Naive thymus-derived CD4-positive, alpha-beta T cell (primary cell): ENCODE measurements at regions of chr13 and their contacts with region 1.

Region 1: DNA sequence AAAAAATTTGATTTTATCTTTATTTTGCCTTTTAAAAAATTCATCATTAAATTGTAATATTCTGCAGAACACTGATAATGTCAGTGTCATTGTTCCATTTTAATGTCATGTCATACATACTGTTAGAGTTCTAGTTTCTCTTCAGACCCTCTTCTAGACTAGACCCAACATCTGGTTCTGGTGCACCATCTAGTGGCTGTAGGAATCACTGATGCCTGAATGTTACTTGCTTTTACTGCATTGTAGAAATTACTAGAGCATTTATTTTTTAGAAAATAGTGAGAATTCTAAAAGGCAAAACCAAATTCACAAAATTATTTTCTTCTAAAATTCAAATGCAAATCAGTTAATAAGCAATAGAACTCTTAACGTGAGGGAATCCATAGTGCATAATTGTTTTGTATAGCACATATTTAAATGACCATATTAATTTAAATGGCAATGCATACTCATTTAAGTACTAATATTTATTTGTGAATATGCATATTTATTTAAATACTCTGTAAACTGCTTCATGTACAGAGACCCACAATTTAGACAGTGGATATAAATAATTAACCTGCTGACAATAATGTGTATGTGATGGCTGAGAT is 425.7 kb downstream of the KLF12 start:
- DNase-seq: peak in 7 of 9 donors; percentile 58 to 77 (median 68)
- ATAC-seq: peak; percentile 89
- H3K4me3 ChIP-seq: no peak overlapping the region
- H3K4me3 Mint-ChIP-seq: no peak overlapping the region
- H3K27ac ChIP-seq: no peak overlapping the region
- H3K27ac Mint-ChIP-seq: peak overlapping the region in 4 of 9 donors; percentile 46 to 74 (median 61)
- H3K4me1 ChIP-seq: peaks cover 4% of the 10 kb centered on the region in 2 donors
- H3K4me1 Mint-ChIP-seq: peaks cover 11 to 44% (median 24%) of the 10 kb centered on the region in 7 donors
- H3K27me3 ChIP-seq: no peaks in the 10 kb centered on the region
- H3K27me3 Mint-ChIP-seq: no peaks in the 10 kb centered on the region

Region 2: DNA sequence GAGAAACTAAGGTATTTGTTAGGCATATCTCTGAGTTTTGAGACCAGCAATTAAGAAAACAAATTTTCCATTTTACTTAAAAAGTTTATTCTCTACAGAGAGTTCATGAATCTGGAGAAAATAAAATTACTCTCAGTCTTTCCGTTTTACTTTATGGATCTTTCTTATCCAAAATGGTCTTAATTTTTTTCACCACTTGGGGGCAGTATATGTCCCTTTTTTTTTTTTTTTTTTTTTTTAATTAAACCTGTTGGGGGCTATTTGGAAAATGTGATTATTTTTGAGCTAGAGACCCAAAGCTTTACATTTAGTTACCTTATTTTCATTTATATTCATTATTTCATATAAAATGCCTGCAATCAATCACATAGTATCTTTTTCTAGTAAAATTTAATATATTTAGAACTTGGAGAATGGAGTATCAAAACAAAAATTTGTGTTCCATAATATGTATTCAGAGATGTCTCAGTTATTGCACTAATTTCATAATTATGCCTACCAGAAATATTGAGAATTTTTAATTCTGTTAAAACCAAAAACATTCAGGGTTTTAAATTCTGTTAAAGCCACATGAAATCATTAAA is 899.5 kb before region 1 on chr13:
- CTCF ChIA-PET with region 1: interaction called, 3 read pairs
- POLR2A ChIA-PET with region 1: no interaction called
- intact Hi-C with region 1: loop called (anchors 1 kb)
- DNase-seq: peak in 4 of 9 donors; percentile 7 to 22 (median 16)
- ATAC-seq: peak; percentile 51
- H3K4me3 ChIP-seq: no peak overlapping the region
- H3K4me3 Mint-ChIP-seq: no peak overlapping the region
- H3K27ac ChIP-seq: no peak overlapping the region
- H3K27ac Mint-ChIP-seq: peak overlapping the region in 3 of 9 donors; percentile 2 to 82 (median 76)
- H3K4me1 ChIP-seq: no peaks in the 10 kb centered on the region
- H3K4me1 Mint-ChIP-seq: peaks cover 0 to 8% (median 5%) of the 10 kb centered on the region in 7 donors
- H3K27me3 ChIP-seq: no peaks in the 10 kb centered on the region
- H3K27me3 Mint-ChIP-seq: no peaks in the 10 kb centered on the region

Region 3: GRCh38 chr13:72963762-72964161 is 744.7 kb before region 1 on chr13:
- CTCF ChIA-PET with region 1: no interaction called
- POLR2A ChIA-PET with region 1: no interaction called
- intact Hi-C with region 1: loop called in 1 of 2 experiments (anchors 10 kb)
- DNase-seq: no peak
- ATAC-seq: no peak
- H3K4me3 ChIP-seq: no peak overlapping the region
- H3K4me3 Mint-ChIP-seq: no peak overlapping the region
- H3K27ac ChIP-seq: no peak overlapping the region
- H3K27ac Mint-ChIP-seq: no peak overlapping the region
- H3K4me1 ChIP-seq: no peaks in the 10 kb centered on the region
- H3K4me1 Mint-ChIP-seq: peaks cover 0 to 4% (median 0%) of the 10 kb centered on the region in 7 donors
- H3K27me3 ChIP-seq: no peaks in the 10 kb centered on the region
- H3K27me3 Mint-ChIP-seq: no peaks in the 10 kb centered on the region

Region 4: DNA sequence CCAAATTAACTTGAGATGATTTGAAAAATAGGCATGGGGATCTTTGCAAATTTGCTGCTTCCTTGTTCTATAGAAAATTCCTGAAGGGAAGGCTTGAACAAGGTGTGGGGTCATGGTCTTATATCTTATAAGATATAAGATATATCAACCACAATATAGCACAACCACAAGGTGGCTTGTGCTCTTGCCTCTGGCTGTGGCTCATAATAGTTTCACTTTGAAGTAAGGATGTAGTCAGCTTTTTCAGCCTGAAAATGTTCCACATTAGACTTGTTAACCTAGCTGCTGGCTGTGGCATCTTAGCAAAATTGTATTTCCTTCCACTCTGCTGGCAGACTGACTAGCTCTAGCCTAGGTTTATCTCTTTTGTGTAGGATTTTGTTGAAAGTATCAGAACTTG is 479.9 kb before region 1 on chr13:
- CTCF ChIA-PET with region 1: interaction called, 8 read pairs
- POLR2A ChIA-PET with region 1: no interaction called
- intact Hi-C with region 1: loop called (anchors 1 kb)
- DNase-seq: peak in 8 of 9 donors; percentile 26 to 62 (median 48)
- ATAC-seq: peak; percentile 67
- H3K4me3 ChIP-seq: no peak overlapping the region
- H3K4me3 Mint-ChIP-seq: peak overlapping the region in 5 of 10 donors; percentile 16 to 49 (median 44)
- H3K27ac ChIP-seq: no peak overlapping the region
- H3K27ac Mint-ChIP-seq: peak overlapping the region in 8 of 9 donors; percentile 41 to 79 (median 62)
- H3K4me1 ChIP-seq: peaks cover 6 to 28% of the 10 kb centered on the region in 2 donors
- H3K4me1 Mint-ChIP-seq: peaks cover 31 to 63% (median 52%) of the 10 kb centered on the region in 7 donors
- H3K27me3 ChIP-seq: no peaks in the 10 kb centered on the region
- H3K27me3 Mint-ChIP-seq: peaks cover 0 to 3% (median 0%) of the 10 kb centered on the region in 5 donors

Region 5: DNA sequence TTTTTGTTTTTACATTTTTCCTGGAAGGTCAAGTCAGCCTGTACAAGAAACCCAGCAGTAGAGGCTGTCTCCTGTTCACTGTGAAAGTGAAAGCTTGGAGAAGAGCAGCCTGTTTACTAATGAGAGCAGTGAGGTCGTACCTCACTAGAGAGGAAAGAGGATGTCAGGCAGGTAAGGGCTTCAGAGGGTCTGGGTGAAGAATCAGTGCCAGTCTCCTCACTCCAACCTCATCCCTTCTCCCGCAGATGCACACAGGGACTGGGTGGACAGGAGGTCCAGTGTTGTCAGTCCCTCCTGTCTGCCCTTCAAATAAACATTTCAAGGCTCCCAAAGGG is 187.2 kb before region 1 on chr13:
- CTCF ChIA-PET with region 1: interaction called, 3 read pairs
- POLR2A ChIA-PET with region 1: no interaction called
- intact Hi-C with region 1: loop called in 1 of 2 experiments (anchors 2 kb)
- DNase-seq: peak in 6 of 9 donors; percentile 35 to 57 (median 52)
- ATAC-seq: peak; percentile 79
- H3K4me3 ChIP-seq: peak overlapping the region; percentile 59
- H3K4me3 Mint-ChIP-seq: peak overlapping the region; percentile 82 to 93 (median 88)
- H3K27ac ChIP-seq: peak overlapping the region; percentile 71
- H3K27ac Mint-ChIP-seq: peak overlapping the region; percentile 89 to 99 (median 97)
- H3K4me1 ChIP-seq: peaks cover 0 to 13% of the 10 kb centered on the region in 2 donors
- H3K4me1 Mint-ChIP-seq: peaks cover 9 to 32% (median 25%) of the 10 kb centered on the region in 7 donors
- H3K27me3 ChIP-seq: no peaks in the 10 kb centered on the region
- H3K27me3 Mint-ChIP-seq: peaks cover 0 to 3% (median 0%) of the 10 kb centered on the region in 5 donors